ENCODE measurements at regions of chr6 and their contacts with region 1.

Region 1: DNA sequence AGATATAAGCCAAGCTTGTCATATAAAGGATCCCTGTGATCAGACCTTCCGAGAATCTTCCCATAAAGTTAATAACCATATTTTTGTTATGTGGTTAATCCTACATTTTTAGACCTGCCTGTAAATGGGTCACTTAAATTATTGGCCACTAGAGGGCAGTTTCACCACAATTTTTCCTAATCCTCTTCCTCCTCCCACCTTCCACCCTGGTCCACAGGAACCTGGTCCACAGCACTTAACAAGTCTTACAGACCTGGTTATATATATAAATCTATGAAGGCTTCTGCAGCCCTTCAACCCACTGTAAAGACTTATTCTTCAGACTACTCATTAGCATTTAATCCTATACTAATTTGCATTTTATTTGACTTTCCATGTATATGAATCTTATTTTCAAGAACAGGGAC is 28.3 kb downstream of the MRS2 start:
- DNase-seq: peak; percentile 31
- H3K4me3 Mint-ChIP-seq: no peak overlapping the region
- H3K27ac Mint-ChIP-seq: no peak overlapping the region
- H3K4me1 Mint-ChIP-seq: no peaks in the 10 kb centered on the region
- H3K27me3 Mint-ChIP-seq: no peaks in the 10 kb centered on the region

Region 2: DNA sequence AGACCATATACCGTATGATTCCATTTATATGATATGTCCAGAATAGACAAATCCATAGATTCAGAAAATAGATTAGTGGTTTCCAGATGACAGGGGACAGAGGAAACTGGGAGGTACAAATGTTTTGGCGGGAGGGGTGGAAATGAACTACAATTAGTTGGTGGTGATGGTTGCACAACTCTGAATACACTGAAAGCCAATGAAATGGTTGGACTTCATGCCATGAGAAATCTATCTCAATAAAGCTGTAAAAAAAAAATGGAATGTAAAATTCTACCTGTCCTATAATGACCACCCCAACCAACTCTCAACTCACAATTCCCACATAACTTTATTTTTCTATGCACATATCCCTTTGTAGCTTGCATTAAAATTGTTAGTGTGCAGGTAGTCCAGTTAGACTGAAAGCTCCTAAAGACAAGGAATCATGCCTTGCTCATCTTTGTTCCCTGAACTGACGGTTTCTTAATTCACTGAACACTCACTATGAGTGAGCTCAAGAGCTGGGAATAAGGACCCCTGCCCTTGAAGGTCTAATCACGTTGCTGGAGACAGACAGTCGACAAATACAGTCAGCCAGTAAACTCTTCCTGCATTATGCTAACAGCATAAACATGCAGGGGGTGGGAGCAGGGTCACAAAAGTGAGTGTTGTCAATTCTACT is 74.6 kb before region 1 on chr6:
- CTCF ChIA-PET with region 1: no interaction called
- DNase-seq: no peak
- H3K4me3 Mint-ChIP-seq: no peak overlapping the region
- H3K27ac Mint-ChIP-seq: no peak overlapping the region
- H3K4me1 Mint-ChIP-seq: peaks cover 20% of the 10 kb centered on the region
- H3K27me3 Mint-ChIP-seq: peaks cover 42% of the 10 kb centered on the region

Region 3: GRCh38 chr6:24440897-24441598 is 10.0 kb after region 1 on chr6:
- CTCF ChIA-PET with region 1: interaction called, 17 read pairs
- DNase-seq: no peak
- H3K4me3 Mint-ChIP-seq: no peak overlapping the region
- H3K27ac Mint-ChIP-seq: no peak overlapping the region
- H3K4me1 Mint-ChIP-seq: no peaks in the 10 kb centered on the region
- H3K27me3 Mint-ChIP-seq: peaks cover 5% of the 10 kb centered on the region

Region 4: DNA sequence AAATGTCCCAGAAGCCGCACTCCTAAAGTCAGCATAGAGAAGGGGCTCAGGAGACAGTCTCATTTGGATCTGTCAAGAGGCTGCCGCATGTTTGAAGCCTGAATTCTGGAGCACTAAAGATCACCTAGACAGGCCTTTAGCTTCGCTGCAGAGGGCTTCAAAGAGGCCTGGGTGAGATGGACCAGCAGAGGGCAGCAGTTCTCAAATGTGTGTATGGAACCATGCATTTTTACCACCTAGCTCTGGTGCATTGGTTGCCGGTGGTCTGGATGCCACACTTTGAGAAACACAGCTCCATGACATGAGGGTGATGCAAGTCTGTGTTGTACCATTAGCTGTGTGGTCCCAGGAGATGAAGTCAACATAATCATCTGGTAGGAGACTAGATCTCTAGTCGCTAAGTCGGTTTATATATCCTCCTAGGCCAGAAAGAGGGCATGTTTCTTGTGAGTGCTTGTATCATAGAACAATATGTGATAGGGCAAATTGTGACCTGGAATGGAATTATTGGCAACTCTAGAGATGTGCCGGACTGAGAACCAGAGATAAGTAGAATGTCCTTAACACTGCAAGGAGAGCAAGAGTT is 150.1 kb after region 1 on chr6:
- CTCF ChIA-PET with region 1: no interaction called
- DNase-seq: peak; percentile 87
- H3K4me3 Mint-ChIP-seq: no peak overlapping the region
- H3K27ac Mint-ChIP-seq: no peak overlapping the region
- H3K4me1 Mint-ChIP-seq: peaks cover 2% of the 10 kb centered on the region
- H3K27me3 Mint-ChIP-seq: peaks cover 15% of the 10 kb centered on the region

Measured in activated naive CD4-positive, alpha-beta T cell treated with anti-CD3 and anti-CD28 coated beads, Interleukin-2, amount 10 ng/mL, durations not matched to agents 7 days and 5 days (primary cell).